CD4-positive, alpha-beta memory T cell (primary cell): ENCODE measurements at regions of chr3 and their contacts with region 1.

Region 1: DNA sequence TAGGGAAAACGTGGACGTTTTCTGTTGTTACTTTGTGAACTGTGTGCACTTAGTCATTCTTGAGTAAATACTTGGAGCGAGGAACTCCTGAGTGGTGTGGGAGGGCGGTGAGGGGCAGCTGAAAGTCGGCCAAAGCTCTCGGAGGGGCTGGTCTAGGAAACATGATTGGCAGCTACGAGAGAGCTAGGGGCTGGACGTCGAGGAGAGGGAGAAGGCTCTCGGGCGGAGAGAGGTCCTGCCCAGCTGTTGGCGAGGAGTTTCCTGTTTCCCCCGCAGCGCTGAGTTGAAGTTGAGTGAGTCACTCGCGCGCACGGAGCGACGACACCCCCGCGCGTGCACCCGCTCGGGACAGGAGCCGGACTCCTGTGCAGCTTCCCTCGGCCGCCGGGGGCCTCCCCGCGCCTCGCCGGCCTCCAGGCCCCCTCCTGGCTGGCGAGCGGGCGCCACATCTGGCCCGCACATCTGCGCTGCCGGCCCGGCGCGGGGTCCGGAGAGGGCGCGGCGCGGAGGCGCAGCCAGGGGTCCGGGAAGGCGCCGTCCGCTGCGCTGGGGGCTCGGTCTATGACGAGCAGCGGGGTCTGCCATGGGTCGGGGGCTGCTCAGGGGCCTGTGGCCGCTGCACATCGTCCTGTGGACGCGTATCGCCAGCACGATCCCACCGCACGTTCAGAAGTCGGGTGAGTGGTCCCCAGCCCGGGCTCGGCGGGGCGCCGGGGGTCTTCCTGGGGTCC is at the start of gene TGFBR2:
- DNase-seq: peak; percentile 67 to 90 (median 69)
- H3K4me3 ChIP-seq: peak within 1 kb of the TSS; percentile 82 to 89
- H3K4me3 Mint-ChIP-seq: peak within 1 kb of the TSS; percentile 97 to 99 (median 99)
- H3K27ac ChIP-seq: peak within 1 kb of the TSS; percentile 85
- H3K27ac Mint-ChIP-seq: peak within 1 kb of the TSS; percentile 92 to 99 (median 98)
- H3K4me1 ChIP-seq: peaks cover 57% of the 10 kb centered on the region
- H3K4me1 Mint-ChIP-seq: peaks cover 43 to 67% (median 48%) of the 10 kb centered on the region in 4 donors
- H3K27me3 ChIP-seq: no peaks in the 10 kb centered on the region
- H3K27me3 Mint-ChIP-seq: no peaks in the 10 kb centered on the region
- total RNA-seq, gene TGFBR2: 110 TPM

Region 2: GRCh38 chr3:30353711-30354467 is 252.6 kb before region 1 on chr3:
- CTCF ChIA-PET with region 1: interaction called, 3 read pairs
- POLR2A ChIA-PET with region 1: interaction called, 14 read pairs
- intact Hi-C with region 1: loop called (anchors 2 kb)
- DNase-seq: peak; percentile 82 to 91 (median 86)
- H3K4me3 ChIP-seq: peak overlapping the region in 1 of 2 donors; percentile 33
- H3K4me3 Mint-ChIP-seq: peak overlapping the region; percentile 13 to 81 (median 64)
- H3K27ac ChIP-seq: no peak overlapping the region
- H3K27ac Mint-ChIP-seq: peak overlapping the region; percentile 29 to 79 (median 69)
- H3K4me1 ChIP-seq: peaks cover 67% of the 10 kb centered on the region
- H3K4me1 Mint-ChIP-seq: peaks cover 50 to 79% (median 63%) of the 10 kb centered on the region in 4 donors
- H3K27me3 ChIP-seq: no peaks in the 10 kb centered on the region
- H3K27me3 Mint-ChIP-seq: peaks cover under 1 to 5% of the 10 kb centered on the region in 2 donors

Region 3: GRCh38 chr3:30644593-30645012 is 38.1 kb after region 1 on chr3:
- CTCF ChIA-PET with region 1: interaction called, 8 read pairs
- POLR2A ChIA-PET with region 1: interaction called, 51 read pairs
- intact Hi-C with region 1: loop called (anchors 1 kb)
- DNase-seq: peak; percentile 61 to 87 (median 66)
- H3K4me3 ChIP-seq: peak overlapping the region in 1 of 2 donors; percentile 37
- H3K4me3 Mint-ChIP-seq: peak overlapping the region; percentile 71 to 86 (median 78)
- H3K27ac ChIP-seq: peak overlapping the region; percentile 66
- H3K27ac Mint-ChIP-seq: peak overlapping the region; percentile 88 to 97 (median 93)
- H3K4me1 ChIP-seq: peaks cover 99% of the 10 kb centered on the region
- H3K4me1 Mint-ChIP-seq: peaks cover 77 to 97% (median 87%) of the 10 kb centered on the region in 4 donors
- H3K27me3 ChIP-seq: no peaks in the 10 kb centered on the region
- H3K27me3 Mint-ChIP-seq: no peaks in the 10 kb centered on the region

Region 4: DNA sequence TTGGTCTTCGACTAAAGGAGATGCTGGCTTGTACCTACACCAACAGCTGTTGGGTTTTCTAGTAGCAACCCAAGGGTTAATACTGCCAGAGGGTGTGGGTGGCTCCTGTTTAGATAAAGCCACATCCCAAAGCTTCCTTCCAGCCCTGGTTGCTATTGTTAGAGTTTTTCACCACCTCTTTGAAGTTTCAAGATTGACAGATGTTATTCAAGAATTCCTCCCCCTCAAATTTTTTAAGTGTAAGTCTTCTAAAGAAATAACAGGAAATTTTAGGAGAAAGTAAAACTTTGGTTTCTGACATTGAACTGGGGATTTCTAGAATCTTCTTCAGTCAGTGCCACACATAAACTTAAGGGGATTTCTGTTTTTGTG is 60.8 kb after region 1 on chr3:
- CTCF ChIA-PET with region 1: no interaction called
- POLR2A ChIA-PET with region 1: interaction called, 94 read pairs
- intact Hi-C with region 1: no loop called
- DNase-seq: peak; percentile 36 to 57 (median 45)
- H3K4me3 ChIP-seq: no peak overlapping the region
- H3K4me3 Mint-ChIP-seq: peak overlapping the region in 6 of 8 donors; percentile 8 to 79 (median 48)
- H3K27ac ChIP-seq: peak overlapping the region; percentile 42
- H3K27ac Mint-ChIP-seq: peak overlapping the region; percentile 63 to 87 (median 83)
- H3K4me1 ChIP-seq: peaks cover 94% of the 10 kb centered on the region
- H3K4me1 Mint-ChIP-seq: peaks cover 73 to 97% (median 87%) of the 10 kb centered on the region in 4 donors
- H3K27me3 ChIP-seq: no peaks in the 10 kb centered on the region
- H3K27me3 Mint-ChIP-seq: no peaks in the 10 kb centered on the region

Region 5: DNA sequence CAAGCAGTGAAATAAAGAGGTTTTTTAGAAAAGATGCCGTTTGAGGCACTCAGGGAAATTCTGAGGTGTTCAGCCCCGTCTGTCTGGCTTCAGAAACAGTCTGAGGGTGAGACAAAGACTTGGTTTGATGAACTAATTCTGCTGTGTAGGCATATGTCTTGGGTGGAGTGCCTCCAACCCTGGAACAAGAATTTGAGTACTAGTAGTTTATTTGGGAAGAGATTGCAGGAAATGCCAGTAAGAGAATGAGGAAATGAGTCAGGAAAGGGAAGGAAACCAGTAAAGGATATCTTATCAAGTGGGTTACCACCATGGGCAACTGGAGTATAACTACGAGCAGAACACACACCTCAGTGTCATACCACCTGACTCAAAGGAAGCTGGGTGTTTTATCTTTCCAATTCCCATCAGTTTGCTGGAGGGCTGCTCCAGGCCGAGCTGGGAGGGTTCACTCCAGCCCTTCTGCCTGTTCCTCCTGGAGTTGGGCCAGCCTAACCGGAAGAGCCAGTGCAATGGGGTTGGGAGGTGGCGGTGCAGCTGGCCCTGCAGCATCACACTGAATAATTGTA is 75.3 kb after region 1 on chr3:
- CTCF ChIA-PET with region 1: interaction called, 3 read pairs
- POLR2A ChIA-PET with region 1: interaction called, 21 read pairs
- intact Hi-C with region 1: no loop called
- DNase-seq: no peak
- H3K4me3 ChIP-seq: no peak overlapping the region
- H3K4me3 Mint-ChIP-seq: peak overlapping the region in 7 of 8 donors; percentile 40 to 74 (median 58)
- H3K27ac ChIP-seq: no peak overlapping the region
- H3K27ac Mint-ChIP-seq: peak overlapping the region; percentile 40 to 89 (median 81)
- H3K4me1 ChIP-seq: peaks cover 87% of the 10 kb centered on the region
- H3K4me1 Mint-ChIP-seq: peaks cover 65 to 97% (median 82%) of the 10 kb centered on the region in 4 donors
- H3K27me3 ChIP-seq: no peaks in the 10 kb centered on the region
- H3K27me3 Mint-ChIP-seq: no peaks in the 10 kb centered on the region

Region 6: GRCh38 chr3:31067009-31067408 is 460.5 kb after region 1 on chr3:
- CTCF ChIA-PET with region 1: no interaction called
- POLR2A ChIA-PET with region 1: no interaction called
- intact Hi-C with region 1: no loop called
- DNase-seq: no peak
- H3K4me3 ChIP-seq: no peak overlapping the region
- H3K4me3 Mint-ChIP-seq: no peak overlapping the region
- H3K27ac ChIP-seq: no peak overlapping the region
- H3K27ac Mint-ChIP-seq: no peak overlapping the region
- H3K4me1 ChIP-seq: no peaks in the 10 kb centered on the region
- H3K4me1 Mint-ChIP-seq: peaks cover 0 to 1% (median 0%) of the 10 kb centered on the region in 4 donors
- H3K27me3 ChIP-seq: no peaks in the 10 kb centered on the region
- H3K27me3 Mint-ChIP-seq: no peaks in the 10 kb centered on the region